Left cardiac atrium (tissue), 4 donors: ENCODE measurements at regions of chr10 and their contacts with region 1.

Region 1: GRCh38 chr10:133565441-133566294 is at the start of gene SYCE1:
- DNase-seq: peak; percentile 43
- ATAC-seq: peak in 1 of 2 donors; percentile 51
- total RNA-seq, gene SYCE1: 0.62 to 0.84 TPM

Region 2: DNA sequence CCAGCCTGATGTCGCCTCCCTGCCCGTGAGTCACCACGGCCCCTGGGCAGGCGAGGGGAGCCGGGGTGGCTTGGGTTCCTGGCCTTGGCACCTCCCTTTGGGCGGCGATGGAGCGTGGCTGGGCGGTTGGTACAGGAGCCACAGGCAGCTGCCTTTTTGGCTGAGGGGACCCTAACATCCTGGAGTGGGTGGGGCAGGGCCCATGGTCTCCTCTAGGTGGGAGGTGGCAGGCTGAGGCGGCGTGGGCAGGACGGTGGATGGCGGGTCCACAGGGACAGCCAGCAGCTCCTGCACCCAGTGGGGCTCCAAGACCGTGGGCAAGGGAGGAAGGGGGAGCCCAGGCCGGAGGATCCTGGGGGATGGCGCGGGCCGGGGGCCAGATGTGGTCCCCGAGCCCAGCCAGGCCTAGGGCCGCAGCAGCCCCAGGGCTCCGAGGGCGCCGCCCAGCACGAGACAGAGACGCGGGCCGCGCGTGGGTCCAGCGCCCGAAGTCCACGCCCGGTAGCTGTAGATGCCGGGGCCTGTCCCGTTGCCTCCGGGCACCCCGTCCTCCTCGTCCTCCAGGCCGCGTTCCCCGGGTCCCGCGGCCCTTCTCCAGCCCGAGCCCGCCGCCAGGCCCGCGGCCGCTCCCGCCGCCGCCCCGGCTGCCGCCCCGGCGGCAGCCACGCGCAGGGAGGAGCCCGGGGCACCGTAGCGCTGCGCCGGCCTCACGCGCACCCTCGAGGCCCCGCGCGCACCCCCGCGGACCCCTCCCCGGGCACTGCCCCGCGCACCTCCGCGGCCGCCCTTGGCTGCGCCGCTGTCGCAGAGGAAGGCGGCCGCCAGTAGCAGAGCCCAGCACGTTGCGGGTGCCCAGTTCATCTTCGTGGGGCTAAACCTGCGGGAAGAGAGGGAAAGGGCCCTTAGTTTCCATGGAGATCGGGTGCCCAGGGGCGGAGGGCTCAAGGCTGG is 142.6 kb before region 1 on chr10:
- intact Hi-C with region 1: loop called (anchors 10 kb)
- DNase-seq: no peak
- ATAC-seq: peak; percentile 11 to 27